ENCODE measurements at regions of chr2 and their contacts with region 1.

Region 1: DNA sequence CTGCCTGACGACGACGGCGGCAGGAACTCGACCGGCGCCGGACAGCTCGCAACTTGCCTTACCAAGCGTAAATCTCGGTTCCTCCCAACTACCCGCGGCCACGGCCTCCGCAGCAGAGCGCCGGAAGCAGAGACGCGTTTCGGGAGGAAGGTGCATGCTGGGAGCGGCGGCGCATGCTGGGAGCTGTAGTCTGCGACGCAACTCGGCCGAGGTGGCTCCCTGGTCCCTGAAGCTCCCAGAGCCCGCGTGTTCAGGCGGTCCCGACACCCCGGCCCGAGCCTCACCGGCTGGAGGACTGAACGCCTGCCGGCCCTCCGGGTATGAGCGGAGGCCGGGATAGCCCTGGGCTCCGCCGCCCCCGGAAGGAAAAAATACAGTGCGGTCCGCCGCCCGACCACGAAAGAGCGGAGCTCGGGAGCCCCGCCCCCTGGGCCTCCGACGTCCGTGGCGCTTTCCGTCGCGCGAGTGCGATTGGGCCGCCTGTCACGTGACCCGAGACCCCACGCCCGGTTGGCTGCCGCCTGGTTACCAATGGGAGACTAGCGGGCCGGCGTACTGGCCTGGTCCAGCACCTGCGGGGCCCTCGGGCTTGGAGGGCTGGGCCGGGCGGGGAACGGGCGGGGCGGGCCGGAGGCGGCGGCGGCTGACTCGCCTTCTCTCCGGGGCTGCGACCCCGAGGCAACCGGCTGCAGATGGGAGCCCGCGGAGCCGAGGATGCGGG is at the start of gene CAPN10:
- DNase-seq: peak; percentile 92

Region 2: DNA sequence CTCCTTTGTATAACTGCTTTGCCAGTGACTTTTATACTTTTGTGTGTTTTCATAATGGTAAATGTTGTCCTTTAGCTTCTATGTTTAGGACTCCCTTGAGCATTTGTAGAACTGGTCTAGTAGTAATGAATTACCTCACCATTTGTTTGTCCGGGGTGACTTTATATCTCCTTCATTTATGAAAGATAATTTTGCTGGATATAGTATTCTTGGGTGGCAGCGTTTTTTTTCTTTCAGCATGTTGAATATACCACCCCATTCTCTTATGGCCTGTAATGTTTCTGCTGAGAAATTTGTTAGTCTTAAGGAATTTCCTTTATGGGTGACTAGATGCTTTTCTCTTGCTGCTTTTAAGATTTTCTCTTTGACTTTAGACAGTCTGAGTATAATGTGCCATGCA is 94.9 kb before region 1 on chr2:
- CTCF ChIA-PET with region 1: no interaction called
- POLR2A ChIA-PET with region 1: no interaction called
- DNase-seq: no peak

Region 3: GRCh38 chr2:240560480-240561326 is 25.7 kb before region 1 on chr2:
- CTCF ChIA-PET with region 1: interaction called, 8 read pairs
- POLR2A ChIA-PET with region 1: interaction called, 23 read pairs
- DNase-seq: peak; percentile 94

Region 4: DNA sequence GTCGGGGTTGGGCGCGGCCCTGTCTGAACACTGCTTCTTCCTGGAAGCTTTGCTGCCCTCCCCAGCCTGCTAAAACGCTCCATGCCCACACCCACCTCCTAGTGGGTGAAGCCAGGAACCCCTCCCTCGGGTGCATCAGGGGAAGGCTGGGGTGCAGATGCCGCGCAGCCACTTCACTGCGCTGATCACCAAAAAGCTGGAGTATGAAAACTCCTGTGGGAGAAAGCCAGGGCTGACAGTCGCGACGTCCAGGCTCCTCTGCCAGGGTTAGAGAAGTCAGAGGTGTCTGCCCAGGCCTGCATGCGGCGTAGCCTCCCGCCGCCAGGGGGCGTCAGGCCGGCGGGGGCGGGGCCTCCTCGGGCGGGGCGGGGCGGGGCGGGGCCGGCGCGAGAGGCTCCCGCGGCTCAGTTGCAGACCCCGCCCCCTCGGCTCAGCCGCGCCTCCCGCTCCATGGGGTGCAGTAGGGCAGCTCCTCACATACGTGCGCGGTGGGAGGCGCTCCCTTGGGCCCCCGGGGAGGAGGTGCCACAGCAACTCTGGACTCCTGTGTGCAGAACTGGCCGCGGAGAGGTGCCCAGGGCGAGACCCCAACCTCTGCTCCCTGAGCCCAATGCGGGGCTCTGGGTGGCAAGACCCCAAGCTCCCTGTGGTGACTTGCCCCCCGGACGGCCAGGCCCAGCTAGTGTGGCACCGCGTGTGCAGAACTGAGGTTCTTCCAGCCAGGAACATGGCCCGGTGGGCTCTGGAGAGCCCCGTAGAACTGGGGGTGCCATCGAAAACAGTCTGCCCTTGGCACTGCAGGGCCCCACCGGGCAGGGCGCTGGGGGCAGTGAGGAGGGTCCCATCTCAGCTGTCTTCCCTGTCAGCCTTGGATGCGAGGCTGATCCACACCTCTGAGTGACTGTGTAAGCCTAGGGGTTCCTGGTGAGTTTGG is 19.9 kb before region 1 on chr2:
- CTCF ChIA-PET with region 1: interaction called, 8 read pairs
- POLR2A ChIA-PET with region 1: interaction called, 23 read pairs
- DNase-seq: peak; percentile 81

Region 5: GRCh38 chr2:240575106-240575965 is 11.0 kb before region 1 on chr2:
- CTCF ChIA-PET with region 1: interaction called, 3 read pairs
- POLR2A ChIA-PET with region 1: interaction called, 15 read pairs
- DNase-seq: no peak

Region 6: DNA sequence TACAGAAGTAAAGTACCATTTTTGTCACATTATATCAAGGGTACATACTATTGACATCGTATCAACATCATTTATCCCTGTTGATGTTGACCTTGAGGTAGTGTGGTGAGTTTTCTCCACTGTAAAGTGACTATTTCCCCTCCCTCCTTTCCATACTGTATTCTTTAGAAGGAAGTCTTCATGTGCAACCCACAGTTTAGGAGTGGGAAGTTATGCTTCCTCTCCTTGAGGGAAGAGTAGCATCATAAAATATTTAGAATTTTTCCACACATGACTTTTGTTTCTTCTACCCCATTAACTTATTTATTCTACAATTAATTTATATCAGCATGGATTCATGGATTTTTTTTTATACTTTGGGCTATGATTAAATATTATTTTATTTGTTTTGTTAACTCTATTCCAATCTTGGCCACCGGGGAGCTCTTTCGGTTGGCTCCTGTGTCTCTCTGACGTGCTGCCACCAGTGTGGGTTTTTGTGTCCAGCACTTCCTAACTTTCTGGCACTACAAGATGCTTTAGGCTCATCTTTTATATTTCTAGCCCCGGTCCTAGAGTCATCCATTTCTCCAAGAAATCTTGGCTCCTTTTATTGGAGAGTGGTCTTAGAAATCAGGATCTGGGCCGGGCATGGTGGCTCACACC is 77.3 kb after region 1 on chr2:
- CTCF ChIA-PET with region 1: no interaction called
- POLR2A ChIA-PET with region 1: no interaction called
- DNase-seq: no peak

Measured in HEK293T (cell line).